HEK293T (cell line): ENCODE measurements at regions of chr20 and their contacts with region 1.

Region 1: DNA sequence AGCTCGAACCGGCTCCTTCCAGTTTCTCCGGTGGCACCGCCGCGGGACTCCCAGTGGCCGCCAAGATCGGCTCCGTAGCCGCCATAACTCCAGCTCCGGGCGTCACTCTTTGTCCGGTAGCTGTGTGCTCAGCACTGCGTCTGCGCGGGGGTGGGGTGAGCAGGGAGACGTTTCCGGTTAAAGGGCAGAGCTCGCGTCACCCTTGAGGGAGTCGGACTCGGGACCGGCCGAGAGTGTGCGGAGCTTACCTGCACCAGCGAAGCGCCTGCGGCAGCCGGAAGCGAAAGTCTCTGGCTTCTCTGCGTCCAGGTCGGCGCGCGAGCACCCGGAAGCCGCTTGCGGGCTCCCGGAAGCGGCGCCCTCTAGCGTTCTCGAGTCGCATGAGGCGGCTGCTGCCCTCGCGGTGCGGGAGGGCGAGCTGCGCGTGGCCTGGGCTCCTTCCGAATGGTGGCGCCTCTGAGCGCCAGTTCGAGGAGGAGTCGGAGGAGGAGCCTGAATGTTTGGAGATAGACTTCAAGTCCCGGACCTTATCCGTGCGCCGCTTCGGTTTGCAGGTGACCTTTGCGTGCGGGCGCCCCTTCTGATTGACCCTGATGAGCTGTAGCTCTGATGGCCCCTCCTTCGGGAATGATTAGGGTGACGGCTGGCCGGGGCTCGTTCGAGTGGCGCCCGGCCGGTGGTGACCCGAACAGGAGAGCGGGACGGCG is at the start of gene SCAND1:
- DNase-seq: peak; percentile 95

Region 2: DNA sequence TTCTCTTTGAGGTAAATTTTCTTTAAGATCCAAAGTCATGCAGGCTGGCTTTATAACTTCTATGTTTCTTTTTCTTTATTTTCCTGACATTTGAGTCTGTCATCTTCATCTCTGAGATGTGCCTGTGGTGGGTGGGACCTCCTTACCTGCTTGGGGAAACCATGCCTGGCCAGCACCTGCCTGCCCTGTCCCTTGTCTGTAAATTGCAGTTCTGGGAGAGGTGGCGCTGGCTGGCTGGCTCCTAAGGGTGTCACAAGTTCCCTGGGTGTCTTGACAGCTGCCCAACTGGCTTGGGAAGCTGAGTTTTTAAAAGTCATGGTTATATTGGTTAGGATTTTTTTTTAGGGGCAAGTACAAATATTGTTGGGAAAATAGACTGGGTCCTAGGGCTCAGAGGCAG is 36.3 kb before region 1 on chr20:
- CTCF ChIA-PET with region 1: no interaction called
- POLR2A ChIA-PET with region 1: no interaction called
- DNase-seq: no peak

Region 3: GRCh38 chr20:35942243-35942642 is 12.1 kb before region 1 on chr20:
- CTCF ChIA-PET with region 1: interaction called, 4 read pairs
- POLR2A ChIA-PET with region 1: interaction called, 16 read pairs
- DNase-seq: no peak

Region 4: GRCh38 chr20:35968931-35969330 is 14.6 kb after region 1 on chr20:
- CTCF ChIA-PET with region 1: interaction called, 18 read pairs
- POLR2A ChIA-PET with region 1: interaction called, 16 read pairs
- DNase-seq: no peak

Region 5: GRCh38 chr20:35981969-35982368 is 27.6 kb after region 1 on chr20:
- CTCF ChIA-PET with region 1: interaction called, 9 read pairs
- POLR2A ChIA-PET with region 1: interaction called, 15 read pairs
- DNase-seq: no peak

Region 6: GRCh38 chr20:35994994-35995453 is 40.7 kb after region 1 on chr20:
- CTCF ChIA-PET with region 1: interaction called, 14 read pairs
- POLR2A ChIA-PET with region 1: interaction called, 8 read pairs
- DNase-seq: peak; percentile 78

Region 7: DNA sequence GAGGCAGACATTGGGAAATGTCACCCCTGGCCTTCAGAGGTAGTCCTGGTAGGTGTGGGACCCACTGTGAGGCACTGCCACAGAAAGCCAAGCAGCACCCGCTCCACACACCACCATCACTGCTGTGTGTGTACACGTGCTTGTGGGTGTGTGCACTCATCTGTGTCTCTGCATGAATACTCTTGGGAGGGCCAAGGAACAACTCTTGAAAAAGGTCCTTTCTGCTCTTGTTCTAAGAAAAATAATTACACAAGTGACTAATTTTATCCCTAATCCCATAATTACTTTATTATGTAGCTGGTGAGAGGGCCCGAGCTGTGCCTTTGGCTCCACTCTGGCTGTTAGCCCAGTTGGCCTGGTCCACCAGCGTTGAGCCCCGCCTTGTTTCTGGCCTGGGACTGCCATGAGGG is 178.5 kb after region 1 on chr20:
- CTCF ChIA-PET with region 1: interaction called, 10 read pairs
- POLR2A ChIA-PET with region 1: interaction called, 8 read pairs
- DNase-seq: no peak

Region 8: GRCh38 chr20:36248836-36249235 is 294.5 kb after region 1 on chr20:
- CTCF ChIA-PET with region 1: no interaction called
- POLR2A ChIA-PET with region 1: no interaction called
- DNase-seq: no peak